Vagina (tissue), 2 donors: ENCODE measurements at regions of chr13 and their contacts with region 1.

Region 1: DNA sequence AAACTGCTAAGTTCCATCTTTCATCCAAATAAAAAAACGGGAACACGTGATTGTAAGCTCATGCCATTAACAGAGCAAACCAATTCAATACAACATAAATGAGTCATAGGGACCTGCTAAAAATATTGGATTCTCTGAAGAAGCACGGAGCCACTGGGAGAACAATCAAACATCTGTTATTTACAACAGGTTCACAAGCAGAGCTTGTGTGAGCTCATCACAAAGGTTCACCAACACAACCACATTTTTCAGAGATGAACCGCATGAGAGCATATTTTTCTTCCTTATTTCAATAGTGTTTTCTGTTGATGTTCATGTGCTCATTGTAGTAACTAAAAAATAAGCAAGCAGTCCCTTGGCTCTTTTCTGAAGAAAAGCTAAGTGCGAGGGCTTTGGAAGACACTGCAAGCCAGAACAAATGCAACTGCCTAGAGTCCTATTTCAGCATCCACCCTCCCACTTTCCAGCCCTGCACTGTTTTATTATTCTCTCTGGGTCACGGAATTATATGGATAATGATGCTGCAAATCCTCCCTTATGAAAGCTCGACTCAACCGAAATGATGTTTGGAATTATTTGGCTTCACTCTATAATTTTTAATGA is 545.8 kb downstream of the LIG4 start:
- DNase-seq: no peak
- H3K4me3 ChIP-seq: no peak overlapping the region
- H3K27ac ChIP-seq: no peak overlapping the region
- H3K4me1 ChIP-seq: no peaks in the 10 kb centered on the region
- H3K27me3 ChIP-seq: no peaks in the 10 kb centered on the region
- CTCF ChIP-seq: no peak
- POLR2A ChIP-seq: no peak

Region 2: DNA sequence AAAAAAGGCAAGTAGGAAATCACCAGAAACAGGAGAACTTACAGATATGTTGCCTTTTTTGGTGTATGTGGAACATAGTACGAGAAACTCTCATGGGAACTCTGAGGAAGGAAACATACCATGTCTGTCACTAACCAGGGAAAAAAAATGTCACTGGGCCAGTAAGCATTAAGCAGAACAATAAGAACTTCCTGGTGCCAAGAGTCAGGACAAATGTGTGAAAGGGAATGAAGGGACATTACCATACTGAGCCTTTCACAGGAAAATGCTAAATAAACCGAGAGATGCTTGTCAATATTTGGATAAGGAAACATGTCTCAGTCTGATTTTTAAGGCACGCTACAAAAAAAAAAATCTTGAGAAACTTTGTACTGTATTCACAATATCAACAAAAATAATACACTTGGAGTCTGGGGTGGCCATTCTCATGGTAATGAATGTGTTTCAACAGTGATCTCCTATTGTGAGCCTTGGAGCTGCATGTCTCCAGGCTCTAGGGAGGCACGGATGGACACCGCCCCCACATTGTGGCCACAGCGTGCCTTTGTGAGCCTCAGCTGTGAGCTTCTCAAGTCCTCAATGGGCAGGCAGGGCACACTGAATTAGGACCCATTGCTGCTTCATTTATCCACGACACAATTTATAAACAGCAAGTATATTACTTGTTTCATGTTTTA is 988.6 kb before region 1 on chr13:
- intact Hi-C with region 1: no loop called
- DNase-seq: no peak
- H3K4me3 ChIP-seq: no peak overlapping the region
- H3K27ac ChIP-seq: no peak overlapping the region
- H3K4me1 ChIP-seq: no peaks in the 10 kb centered on the region
- H3K27me3 ChIP-seq: no peaks in the 10 kb centered on the region
- CTCF ChIP-seq: no peak
- POLR2A ChIP-seq: no peak

Region 3: GRCh38 chr13:108525827-108526226 is 856.3 kb after region 1 on chr13:
- intact Hi-C with region 1: loop called (anchors 10 kb)
- DNase-seq: no peak
- H3K4me3 ChIP-seq: no peak overlapping the region
- H3K27ac ChIP-seq: no peak overlapping the region
- H3K4me1 ChIP-seq: no peaks in the 10 kb centered on the region
- H3K27me3 ChIP-seq: no peaks in the 10 kb centered on the region
- CTCF ChIP-seq: no peak
- POLR2A ChIP-seq: no peak